GM12878 (cell line): ENCODE measurements at regions of chr11 and their contacts with region 1.

Region 1: DNA sequence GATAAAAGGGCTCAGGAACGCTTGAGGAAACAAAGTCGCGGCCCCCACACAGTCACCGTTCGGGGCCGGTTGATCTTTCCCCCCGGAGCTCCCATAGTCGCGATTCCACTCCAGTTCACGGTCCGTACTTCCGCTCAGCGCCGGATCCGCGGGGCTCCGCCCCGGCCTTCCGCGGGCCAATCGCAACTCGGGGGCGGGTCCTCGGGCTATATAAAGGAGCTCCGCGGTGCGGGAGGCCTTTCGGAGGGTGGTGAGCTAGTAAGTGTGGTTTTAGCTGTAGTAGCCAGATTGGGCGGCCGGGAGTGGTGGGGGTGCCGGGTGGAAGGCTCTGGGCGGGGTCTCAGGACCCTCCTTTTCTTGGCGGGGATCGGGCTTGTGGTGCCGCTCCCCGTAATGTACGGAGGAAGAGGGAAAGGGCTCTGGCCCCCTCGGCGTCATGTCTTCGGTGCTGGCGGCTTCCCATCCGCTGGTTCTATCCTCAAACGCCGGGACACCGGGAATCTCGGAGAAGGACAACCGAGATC is at the starts of genes C11orf98 and CSKMT:
- DNase-seq: no peak
- ATAC-seq: peak; percentile 91
- H3K4me3 ChIP-seq: peak within 1 kb of the TSS; percentile 95
- H3K27ac ChIP-seq: peak within 1 kb of the TSS; percentile 95
- H3K4me1 ChIP-seq: peaks cover 13% of the 10 kb centered on the region
- H3K27me3 ChIP-seq: no peaks in the 10 kb centered on the region
- CTCF ChIP-seq: no peak
- EP300 ChIP-seq: no peak
- POLR2A ChIP-seq: peak; percentile 96
- RAD21 ChIP-seq: no peak
- polyA plus RNA-seq, gene C11orf98: 134 to 199 TPM
- polyA plus RNA-seq, gene CSKMT: 17.0 to 20.4 TPM

Region 2: GRCh38 chr11:62444236-62444833 is 220.8 kb before region 1 on chr11:
- CTCF ChIA-PET with region 1: no interaction called
- POLR2A ChIA-PET with region 1: no interaction called
- RAD21 ChIA-PET with region 1: no interaction called
- SMC1A ChIA-PET with region 1: no interaction called
- in situ Hi-C with region 1: no loop called
- intact Hi-C with region 1: no loop called
- DNase-seq: peak; percentile 16
- ATAC-seq: peak; percentile 83
- H3K4me3 ChIP-seq: peak overlapping the region; percentile 37; the same call in 1 of the 2 replicates
- H3K27ac ChIP-seq: no peak overlapping the region
- H3K4me1 ChIP-seq: no peaks in the 10 kb centered on the region
- H3K27me3 ChIP-seq: peaks cover 0 to 3% of the 10 kb centered on the region in 2 experiments; a peak in 1 of 4 replicates
- CTCF ChIP-seq: no peak
- EP300 ChIP-seq: no peak
- POLR2A ChIP-seq: no peak
- RAD21 ChIP-seq: no peak

Region 3: DNA sequence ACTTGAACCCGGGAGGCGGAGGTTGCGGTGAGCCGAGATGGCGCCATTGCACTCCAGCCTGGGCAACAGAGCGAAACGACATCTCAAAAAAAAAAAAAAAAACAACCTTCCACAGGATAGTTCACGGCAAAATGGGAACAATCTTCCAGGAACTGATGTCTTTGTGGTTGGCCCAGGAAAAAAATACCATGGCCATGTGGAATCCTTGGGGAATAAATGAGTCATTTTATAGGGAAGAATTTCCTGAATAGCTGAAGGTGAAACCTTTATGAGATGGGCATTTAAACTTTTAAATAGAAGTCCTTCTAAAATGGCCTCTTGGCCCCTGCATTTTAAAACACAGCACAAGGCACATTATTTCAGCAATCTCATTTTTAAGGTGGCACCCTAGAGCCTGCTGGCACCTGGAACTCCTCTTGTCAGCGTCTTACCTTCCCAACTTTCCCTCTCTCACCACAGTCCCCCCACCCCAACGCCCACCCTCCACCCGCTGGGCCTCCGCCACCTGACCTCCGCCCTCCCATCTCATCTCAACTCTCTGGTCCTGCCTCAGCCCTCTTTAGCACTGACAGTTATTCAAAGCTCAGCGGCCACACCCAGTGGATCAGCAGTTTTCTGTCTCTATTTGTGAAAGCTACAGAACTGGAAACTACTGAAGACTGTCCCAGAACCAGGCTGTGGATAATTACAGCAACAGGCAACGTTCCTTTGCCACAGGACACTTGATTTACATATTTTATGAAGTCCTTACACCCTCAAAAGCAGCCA is 203.2 kb before region 1 on chr11:
- CTCF ChIA-PET with region 1: no interaction called
- POLR2A ChIA-PET with region 1: no interaction called
- RAD21 ChIA-PET with region 1: no interaction called
- SMC1A ChIA-PET with region 1: no interaction called
- in situ Hi-C with region 1: no loop called
- intact Hi-C with region 1: no loop called
- DNase-seq: no peak
- ATAC-seq: no peak
- H3K4me3 ChIP-seq: no peak overlapping the region
- H3K27ac ChIP-seq: no peak overlapping the region
- H3K4me1 ChIP-seq: peaks cover 9% of the 10 kb centered on the region; the same call in 1 of the 2 replicates
- H3K27me3 ChIP-seq: no peaks in the 10 kb centered on the region
- CTCF ChIP-seq: no peak
- EP300 ChIP-seq: no peak
- POLR2A ChIP-seq: no peak
- RAD21 ChIP-seq: no peak

Region 4: GRCh38 chr11:62573592-62574362 is 91.4 kb before region 1 on chr11 and contains the start of gene EEF1G:
- CTCF ChIA-PET with region 1: no interaction called
- POLR2A ChIA-PET with region 1: interaction called, 13 read pairs
- RAD21 ChIA-PET with region 1: interaction called, 5 read pairs
- SMC1A ChIA-PET with region 1: interaction called, 5 read pairs
- in situ Hi-C with region 1: no loop called
- intact Hi-C with region 1: no loop called
- DNase-seq: peak; percentile 99
- ATAC-seq: peak; percentile 96
- H3K4me3 ChIP-seq: peak within 1 kb of the TSS; percentile 99
- H3K27ac ChIP-seq: peak within 1 kb of the TSS; percentile 93
- H3K4me1 ChIP-seq: peaks cover 24% of the 10 kb centered on the region
- H3K27me3 ChIP-seq: no peaks in the 10 kb centered on the region
- CTCF ChIP-seq: no peak
- EP300 ChIP-seq: peak in 1 of 2 experiments; percentile 51; a peak in 1 of 4 replicates
- POLR2A ChIP-seq: peak; percentile 93
- RAD21 ChIP-seq: no peak
- polyA plus RNA-seq, gene EEF1G: 1,227 to 1,233 TPM

Region 5: DNA sequence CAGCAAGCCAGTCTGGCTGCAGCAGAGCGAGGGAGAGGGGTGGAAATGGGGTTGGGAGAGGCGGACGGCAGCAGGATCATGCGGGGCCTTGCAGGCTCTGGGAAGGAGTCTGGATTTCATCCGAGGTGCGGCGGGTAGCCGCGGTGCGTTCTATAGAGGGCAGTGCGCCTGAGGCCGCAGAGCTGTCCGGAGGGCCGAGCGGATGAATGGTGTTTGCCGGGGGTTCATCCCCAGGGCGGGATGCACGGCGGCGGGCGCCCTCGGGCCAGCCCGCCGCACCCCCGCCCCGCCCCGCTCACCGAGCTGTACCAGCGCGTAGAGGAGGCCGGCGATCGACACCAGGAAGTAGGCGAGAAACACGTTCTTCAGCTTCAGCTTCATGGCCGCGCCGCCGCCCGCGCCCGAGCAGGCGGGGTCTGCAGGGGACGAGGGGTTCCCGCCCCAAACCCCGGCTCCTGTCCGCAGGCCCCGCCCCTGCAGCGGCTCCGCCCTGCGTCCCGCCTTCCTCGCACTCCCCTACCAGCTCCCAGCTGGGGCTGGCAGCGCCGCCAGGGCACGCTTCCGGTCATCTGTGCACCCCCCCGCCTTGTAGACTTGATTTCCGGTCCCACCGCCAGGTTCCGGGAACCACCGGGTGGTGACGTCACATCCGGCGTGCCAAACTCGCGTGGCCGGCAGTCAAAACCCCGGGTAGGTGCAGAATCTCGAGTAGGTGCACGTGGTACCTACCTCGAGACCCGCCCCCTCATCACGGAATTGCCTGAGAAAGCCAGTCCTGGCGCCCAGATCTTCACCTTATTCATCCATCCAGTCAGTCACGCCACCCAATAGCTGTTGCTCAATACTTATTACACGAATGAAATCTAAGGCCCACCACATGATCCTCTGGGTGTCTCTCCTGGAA is 43.3 kb before region 1 on chr11 and contains the start of gene B3GAT3:
- CTCF ChIA-PET with region 1: interaction called, 10 read pairs
- POLR2A ChIA-PET with region 1: interaction called, 50 read pairs
- RAD21 ChIA-PET with region 1: interaction called, 8 read pairs
- SMC1A ChIA-PET with region 1: interaction called, 4 read pairs
- in situ Hi-C with region 1: no loop called
- intact Hi-C with region 1: no loop called
- DNase-seq: peak; percentile 98
- ATAC-seq: peak; percentile 98
- H3K4me3 ChIP-seq: peak within 1 kb of the TSS; percentile 84
- H3K27ac ChIP-seq: peak within 1 kb of the TSS; percentile 81
- H3K4me1 ChIP-seq: 0 out of 2 replicates have a peak, but pooled peaks cover 4% of the 10 kb centered on the region
- H3K27me3 ChIP-seq: no peaks in the 10 kb centered on the region
- CTCF ChIP-seq: no peak
- EP300 ChIP-seq: peak in 1 of 2 experiments; percentile 27; a peak in 1 of 4 replicates
- POLR2A ChIP-seq: peak; percentile 84
- RAD21 ChIP-seq: no peak
- polyA plus RNA-seq, gene B3GAT3: 0.31 to 2.8 TPM

Region 6: GRCh38 chr11:62652161-62653006 is 12.8 kb before region 1 on chr11:
- CTCF ChIA-PET with region 1: interaction called, 8 read pairs
- POLR2A ChIA-PET with region 1: interaction called, 295 read pairs
- RAD21 ChIA-PET with region 1: interaction called, 26 read pairs
- SMC1A ChIA-PET with region 1: interaction called, 41 read pairs
- in situ Hi-C with region 1: no loop called
- intact Hi-C with region 1: loop called (anchors 1 kb)
- DNase-seq: no peak
- ATAC-seq: peak; percentile 16
- H3K4me3 ChIP-seq: peak overlapping the region; percentile 98
- H3K27ac ChIP-seq: peak overlapping the region; percentile 93
- H3K4me1 ChIP-seq: peaks cover 6% of the 10 kb centered on the region
- H3K27me3 ChIP-seq: no peaks in the 10 kb centered on the region
- CTCF ChIP-seq: no peak
- EP300 ChIP-seq: no peak
- POLR2A ChIP-seq: no peak
- RAD21 ChIP-seq: no peak

Region 7: GRCh38 chr11:62705880-62706849 is 41.0 kb after region 1 on chr11:
- CTCF ChIA-PET with region 1: no interaction called
- POLR2A ChIA-PET with region 1: interaction called, 18 read pairs
- RAD21 ChIA-PET with region 1: interaction called, 8 read pairs
- SMC1A ChIA-PET with region 1: interaction called, 4 read pairs
- in situ Hi-C with region 1: no loop called
- intact Hi-C with region 1: no loop called
- DNase-seq: peak; percentile 50
- ATAC-seq: peak; percentile 81
- H3K4me3 ChIP-seq: peak overlapping the region; percentile 79
- H3K27ac ChIP-seq: peak overlapping the region; percentile 51
- H3K4me1 ChIP-seq: peaks cover 29% of the 10 kb centered on the region
- H3K27me3 ChIP-seq: no peaks in the 10 kb centered on the region
- CTCF ChIP-seq: no peak
- EP300 ChIP-seq: no peak
- POLR2A ChIP-seq: peak; percentile 78
- RAD21 ChIP-seq: no peak

Region 8: DNA sequence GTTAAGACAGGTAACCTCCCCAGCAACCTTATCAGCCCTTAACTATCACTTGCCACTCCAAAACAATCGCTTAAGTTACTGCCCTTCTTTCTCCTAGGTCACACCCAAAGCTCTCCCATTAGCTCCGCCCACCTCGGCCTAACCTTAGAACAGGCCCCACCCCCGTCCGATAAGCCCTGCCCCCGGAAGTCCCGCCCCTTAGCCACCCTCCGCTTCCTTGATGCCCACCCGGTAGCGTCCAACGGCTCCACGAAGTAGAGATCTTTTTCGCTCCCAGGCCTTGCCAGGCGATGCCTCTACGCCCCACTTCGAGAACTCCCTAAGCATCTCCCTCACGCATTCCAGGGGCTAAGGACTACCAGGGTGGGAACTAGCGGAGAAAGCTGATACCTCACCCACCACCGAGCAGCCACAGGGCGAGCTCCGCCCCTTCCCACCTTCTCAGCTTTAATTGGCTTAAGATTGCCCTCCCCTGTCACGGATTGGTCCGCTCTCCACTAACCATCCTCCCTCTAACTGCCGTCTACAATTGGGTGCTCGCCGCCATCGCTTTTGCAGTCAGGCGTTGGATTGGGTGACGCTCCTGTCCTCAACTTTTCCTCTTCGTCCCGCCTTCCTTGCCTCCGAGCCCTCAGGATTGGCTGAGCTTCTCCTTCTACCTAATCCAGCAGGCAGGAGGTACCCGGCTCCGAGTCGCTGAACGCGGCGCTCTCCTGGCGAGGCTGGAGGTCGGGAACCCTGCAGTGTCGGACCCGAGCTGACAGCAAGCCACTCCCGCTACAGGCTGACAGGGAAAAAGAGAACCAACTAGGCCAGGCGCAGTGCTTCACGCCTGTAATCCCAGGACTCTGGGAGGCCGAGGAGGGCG is 88.8 kb after region 1 on chr11 and contains the start of gene ZBTB3:
- CTCF ChIA-PET with region 1: no interaction called
- POLR2A ChIA-PET with region 1: interaction called, 11 read pairs
- RAD21 ChIA-PET with region 1: interaction called, 11 read pairs
- SMC1A ChIA-PET with region 1: interaction called, 4 read pairs
- in situ Hi-C with region 1: no loop called
- intact Hi-C with region 1: no loop called
- DNase-seq: peak; percentile 99
- ATAC-seq: peak; percentile 99
- H3K4me3 ChIP-seq: peak within 1 kb of the TSS; percentile 85
- H3K27ac ChIP-seq: peak within 1 kb of the TSS; percentile 92
- H3K4me1 ChIP-seq: peaks cover 6% of the 10 kb centered on the region
- H3K27me3 ChIP-seq: no peaks in the 10 kb centered on the region
- CTCF ChIP-seq: no peak
- EP300 ChIP-seq: no peak
- POLR2A ChIP-seq: peak; percentile 85
- RAD21 ChIP-seq: no peak
- polyA plus RNA-seq, gene ZBTB3: 1.4 to 1.9 TPM